HAP-1 (cell line): ENCODE measurements at regions of chr5 and their contacts with region 1.

Region 1: GRCh38 chr5:140564196-140565023 is at the starts of genes APBB3 and SLC35A4:
- DNase-seq: no peak
- H3K4me3 ChIP-seq: no peak within 1 kb of the TSS
- H3K4me1 ChIP-seq: no peaks in the 10 kb centered on the region
- H3K27me3 ChIP-seq: no peaks in the 10 kb centered on the region

Region 2: GRCh38 chr5:140632150-140633020 is 68.0 kb after region 1 on chr5:
- in situ Hi-C with region 1: loop called (anchors 5 kb)
- DNase-seq: no peak
- H3K4me3 ChIP-seq: no peak overlapping the region
- H3K4me1 ChIP-seq: no peaks in the 10 kb centered on the region
- H3K27me3 ChIP-seq: no peaks in the 10 kb centered on the region